HEK293 (cell line): ENCODE measurements at regions of chr3 and their contacts with region 1.

Region 1: GRCh38 chr3:53130179-53131061 is at the start of gene RFT1:
- H3K4me3 ChIP-seq: peak within 1 kb of the TSS; percentile 99
- H3K27ac ChIP-seq: peak within 1 kb of the TSS; percentile 74
- H3K4me1 ChIP-seq: no peaks in the 10 kb centered on the region
- CTCF ChIP-seq: peak; percentile 64

Region 2: DNA sequence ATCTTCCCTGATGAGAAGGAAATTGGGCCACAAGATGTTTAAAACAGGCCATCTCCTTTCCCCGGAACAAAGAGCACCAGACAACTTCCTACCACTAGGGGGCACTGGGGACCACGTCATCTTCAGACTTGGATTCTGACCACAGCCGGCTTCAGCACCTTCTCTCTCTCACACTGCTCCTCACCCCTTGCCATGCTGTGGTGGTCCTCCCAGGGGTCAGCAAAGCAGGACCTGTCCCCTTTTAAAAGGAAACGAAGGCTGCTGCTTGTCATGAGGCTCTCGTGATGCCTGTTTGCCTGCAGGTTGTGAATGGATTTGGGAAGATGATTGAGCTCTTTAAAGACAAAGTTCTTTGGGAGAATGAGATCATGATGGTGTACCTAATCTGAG is 16.4 kb before region 1 on chr3:
- CTCF ChIA-PET with region 1: interaction called, 11 read pairs
- POLR2A ChIA-PET with region 1: no interaction called
- H3K4me3 ChIP-seq: no peak overlapping the region
- H3K27ac ChIP-seq: no peak overlapping the region
- H3K4me1 ChIP-seq: no peaks in the 10 kb centered on the region
- CTCF ChIP-seq: peak; percentile 77; the same call in 1 of the 2 replicates

Region 3: GRCh38 chr3:53318522-53318921 is 188.1 kb after region 1 on chr3:
- CTCF ChIA-PET with region 1: no interaction called
- POLR2A ChIA-PET with region 1: no interaction called
- H3K4me3 ChIP-seq: no peak overlapping the region
- H3K27ac ChIP-seq: no peak overlapping the region
- H3K4me1 ChIP-seq: no peaks in the 10 kb centered on the region; the same call in 1 of the 2 replicates
- CTCF ChIP-seq: no peak